Gastrocnemius medialis (tissue), 4 donors: ENCODE measurements at regions of chr16 and their contacts with region 1.

Region 1: GRCh38 chr16:3690470-3690928 is 26.8 kb downstream of the TRAP1 start:
- DNase-seq: peak; percentile 86 to 92
- ATAC-seq: peak; percentile 95 to 97
- H3K4me3 ChIP-seq: peak overlapping the region; percentile 39 to 68 (median 51)
- H3K27ac ChIP-seq: peak overlapping the region; percentile 65 to 84 (median 74)
- H3K4me1 ChIP-seq: peaks cover 23 to 27% of the 10 kb centered on the region in 2 donors
- H3K27me3 ChIP-seq: no peaks in the 10 kb centered on the region
- CTCF ChIP-seq: peak; percentile 88 to 97 (median 96)
- POLR2A ChIP-seq: no peak

Region 2: DNA sequence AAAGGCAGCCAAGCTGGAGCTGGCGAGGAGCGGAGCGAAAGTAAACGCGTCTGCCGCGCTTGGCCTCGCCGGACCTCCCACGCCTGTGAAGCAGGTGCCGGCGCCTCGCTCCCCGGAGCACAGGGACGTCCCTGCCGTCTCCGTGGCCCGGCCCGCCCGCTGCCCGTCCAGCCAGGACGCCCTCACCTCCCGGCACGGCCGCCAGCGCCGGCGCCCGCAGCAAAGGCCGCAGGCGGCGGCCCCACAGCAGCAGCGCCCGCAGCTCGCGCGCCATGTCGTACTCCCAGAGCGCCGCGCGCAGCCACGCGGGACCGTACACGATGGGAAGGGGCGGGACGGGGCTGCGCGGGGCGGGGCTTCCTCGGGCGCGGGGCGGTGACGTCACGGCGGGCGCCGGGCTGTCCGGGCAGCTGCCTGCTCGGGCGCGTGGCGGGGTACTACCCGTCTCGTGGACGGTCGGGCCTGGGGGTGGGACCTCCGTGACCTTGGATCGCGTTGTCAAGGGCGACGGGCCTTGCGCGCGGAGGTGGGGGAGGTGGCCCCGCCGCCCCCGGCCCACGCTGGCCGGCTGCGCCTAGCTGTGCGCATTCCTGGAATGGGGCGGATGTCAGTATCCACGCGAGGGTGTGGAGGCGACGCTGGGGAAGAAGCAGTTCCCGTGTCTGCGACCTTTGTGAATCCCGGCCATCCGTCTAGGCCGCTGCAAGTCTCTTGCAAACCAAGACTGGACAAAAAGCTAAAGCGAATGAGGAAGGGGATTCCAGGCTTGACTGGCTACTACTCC is 26.9 kb after region 1 on chr16 and contains the start of gene TRAP1:
- in situ Hi-C with region 1: no loop called
- intact Hi-C with region 1: loop called (anchors 2 kb)
- DNase-seq: peak; percentile 81 to 88
- ATAC-seq: peak; percentile 91 to 93
- H3K4me3 ChIP-seq: peak within 1 kb of the TSS; percentile 69 to 99 (median 78)
- H3K27ac ChIP-seq: peak within 1 kb of the TSS; percentile 88 to 96 (median 93)
- H3K4me1 ChIP-seq: peaks cover 12 to 17% of the 10 kb centered on the region in 2 donors
- H3K27me3 ChIP-seq: no peaks in the 10 kb centered on the region
- CTCF ChIP-seq: no peak
- POLR2A ChIP-seq: peak; percentile 87 to 91
- total RNA-seq, gene TRAP1: 103 to 140 (median 122) TPM

Region 3: GRCh38 chr16:3752984-3753383 is 62.5 kb after region 1 on chr16:
- in situ Hi-C with region 1: loop called in 1 of 4 experiments (anchors 5 kb)
- intact Hi-C with region 1: loop called (anchors 2 kb)
- DNase-seq: peak; percentile 66 to 74
- ATAC-seq: peak; percentile 77 to 81
- H3K4me3 ChIP-seq: no peak overlapping the region
- H3K27ac ChIP-seq: peak overlapping the region; percentile 35 to 70 (median 53)
- H3K4me1 ChIP-seq: peaks cover 32 to 37% of the 10 kb centered on the region in 2 donors
- H3K27me3 ChIP-seq: no peaks in the 10 kb centered on the region
- CTCF ChIP-seq: peak; percentile 26 to 57 (median 35)
- POLR2A ChIP-seq: no peak

Region 4: DNA sequence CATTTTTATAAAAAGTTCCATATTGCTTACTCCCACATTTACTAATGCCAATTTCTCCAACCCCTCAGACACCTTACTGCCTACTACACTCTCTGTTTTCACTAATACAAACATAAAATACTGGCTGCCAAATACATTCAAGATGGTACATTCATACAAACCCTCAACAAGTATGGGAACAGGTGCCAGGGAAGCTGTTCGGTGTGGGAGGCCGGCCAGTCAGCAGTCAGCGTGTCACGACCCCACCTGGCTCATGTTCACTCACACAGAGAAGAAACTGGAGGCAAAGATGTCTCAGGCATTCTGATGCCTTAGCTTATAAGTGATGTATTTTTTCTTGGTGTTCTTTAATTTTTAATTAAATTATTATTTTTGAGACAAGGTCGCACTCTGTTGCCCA is 69.2 kb after region 1 on chr16:
- in situ Hi-C with region 1: loop called in 1 of 4 experiments (anchors 5 kb)
- intact Hi-C with region 1: no loop called
- DNase-seq: no peak
- ATAC-seq: no peak
- H3K4me3 ChIP-seq: no peak overlapping the region
- H3K27ac ChIP-seq: no peak overlapping the region
- H3K4me1 ChIP-seq: peaks cover 5% of the 10 kb centered on the region in 2 donors
- H3K27me3 ChIP-seq: no peaks in the 10 kb centered on the region
- CTCF ChIP-seq: no peak
- POLR2A ChIP-seq: no peak